ENCODE measurements at regions of chr10 and their contacts with region 1.

Region 1: GRCh38 chr10:7525314-7526016 is 114.6 kb upstream of the SFMBT2 start:
- DNase-seq: no peak
- ATAC-seq: peak; percentile 83 to 90

Region 2: GRCh38 chr10:7622969-7623368 is 97.5 kb after region 1 on chr10:
- intact Hi-C with region 1: loop called (anchors 2 to 5 kb)
- DNase-seq: no peak
- ATAC-seq: peak in 1 of 2 donors; percentile 68

Region 3: GRCh38 chr10:7687228-7687907 is 161.9 kb after region 1 on chr10:
- intact Hi-C with region 1: loop called (anchors 2 to 5 kb)
- DNase-seq: peak; percentile 81
- ATAC-seq: peak; percentile 94 to 95

Region 4: GRCh38 chr10:9302120-9302746 is 1776.8 kb after region 1 on chr10:
- intact Hi-C with region 1: loop called (anchors 5 kb)
- DNase-seq: no peak
- ATAC-seq: peak in 1 of 2 donors; percentile 34

Measured in left cardiac atrium (tissue), 4 donors.